Naive thymus-derived CD4-positive, alpha-beta T cell (primary cell): ENCODE measurements at regions of chr17 and their contacts with region 1.

Region 1: GRCh38 chr17:7989781-7990655 is 12.4 kb upstream of the GUCY2D start:
- DNase-seq: peak; percentile 82 to 99 (median 91)
- ATAC-seq: peak; percentile 96
- H3K4me3 ChIP-seq: peak overlapping the region; percentile 58
- H3K4me3 Mint-ChIP-seq: peak overlapping the region; percentile 80 to 88 (median 84)
- H3K27ac ChIP-seq: peak overlapping the region; percentile 65
- H3K27ac Mint-ChIP-seq: peak overlapping the region; percentile 80 to 95 (median 90)
- H3K4me1 ChIP-seq: peaks cover 10 to 13% of the 10 kb centered on the region in 2 donors
- H3K4me1 Mint-ChIP-seq: peaks cover 17 to 26% (median 20%) of the 10 kb centered on the region in 7 donors
- H3K27me3 ChIP-seq: no peaks in the 10 kb centered on the region
- H3K27me3 Mint-ChIP-seq: peaks cover 0 to 16% (median 0%) of the 10 kb centered on the region in 5 donors

Region 2: DNA sequence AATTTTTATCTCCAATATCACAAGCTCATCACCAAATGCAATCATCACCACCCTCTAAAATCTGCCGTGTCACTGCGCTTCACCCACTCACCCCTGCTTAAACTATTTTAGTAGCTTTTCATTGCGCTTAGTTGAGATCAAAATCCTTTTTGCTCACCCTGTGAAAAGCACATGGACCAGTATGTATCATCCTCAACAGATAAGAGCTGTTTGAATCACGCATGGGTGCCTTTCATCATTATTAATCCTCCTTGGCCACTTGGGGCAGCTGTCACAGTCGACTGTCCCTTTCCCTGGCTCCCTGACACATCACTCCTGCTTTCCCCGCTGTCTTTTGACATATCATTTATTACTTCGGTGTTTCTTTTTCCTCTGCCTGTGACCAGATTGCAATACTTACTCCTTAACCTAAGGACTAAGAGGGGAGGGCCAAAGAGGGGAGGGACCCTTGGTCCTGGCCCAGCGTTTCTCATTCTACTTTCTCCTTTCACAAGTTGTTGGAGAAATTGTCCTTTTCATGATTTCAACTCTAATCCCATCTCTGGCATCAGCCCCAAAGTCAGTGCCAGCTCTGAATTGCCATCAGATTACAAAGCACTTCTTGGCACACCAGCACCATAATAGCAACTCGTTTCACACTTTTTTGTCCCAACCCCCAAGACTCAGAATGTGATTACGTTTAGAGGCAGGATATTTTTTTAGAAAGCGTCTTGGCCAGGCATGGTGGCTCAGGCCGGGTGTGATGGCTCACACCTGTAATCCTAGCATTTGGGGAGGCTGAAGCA is 164.6 kb before region 1 on chr17:
- CTCF ChIA-PET with region 1: no interaction called
- POLR2A ChIA-PET with region 1: interaction called, 3 read pairs
- intact Hi-C with region 1: loop called (anchors 1 kb)
- DNase-seq: no peak
- ATAC-seq: peak; percentile 47
- H3K4me3 ChIP-seq: no peak overlapping the region
- H3K4me3 Mint-ChIP-seq: no peak overlapping the region
- H3K27ac ChIP-seq: no peak overlapping the region
- H3K27ac Mint-ChIP-seq: peak overlapping the region in 1 of 9 donors; percentile 23
- H3K4me1 ChIP-seq: no peaks in the 10 kb centered on the region
- H3K4me1 Mint-ChIP-seq: peaks cover 0 to 5% (median 0%) of the 10 kb centered on the region in 7 donors
- H3K27me3 ChIP-seq: no peaks in the 10 kb centered on the region
- H3K27me3 Mint-ChIP-seq: peaks cover 0 to 32% (median 0%) of the 10 kb centered on the region in 5 donors

Region 3: GRCh38 chr17:7851438-7852256 is 138.4 kb before region 1 on chr17:
- CTCF ChIA-PET with region 1: interaction called, 14 read pairs
- POLR2A ChIA-PET with region 1: no interaction called
- intact Hi-C with region 1: no loop called
- DNase-seq: peak; percentile 92 to 96 (median 94)
- ATAC-seq: peak; percentile 91
- H3K4me3 ChIP-seq: peak overlapping the region; percentile 51
- H3K4me3 Mint-ChIP-seq: peak overlapping the region; percentile 45 to 85 (median 70)
- H3K27ac ChIP-seq: peak overlapping the region; percentile 70
- H3K27ac Mint-ChIP-seq: peak overlapping the region; percentile 55 to 93 (median 82)
- H3K4me1 ChIP-seq: peaks cover 20 to 31% of the 10 kb centered on the region in 2 donors
- H3K4me1 Mint-ChIP-seq: peaks cover 0 to 26% (median 17%) of the 10 kb centered on the region in 7 donors
- H3K27me3 ChIP-seq: no peaks in the 10 kb centered on the region
- H3K27me3 Mint-ChIP-seq: no peaks in the 10 kb centered on the region

Region 4: DNA sequence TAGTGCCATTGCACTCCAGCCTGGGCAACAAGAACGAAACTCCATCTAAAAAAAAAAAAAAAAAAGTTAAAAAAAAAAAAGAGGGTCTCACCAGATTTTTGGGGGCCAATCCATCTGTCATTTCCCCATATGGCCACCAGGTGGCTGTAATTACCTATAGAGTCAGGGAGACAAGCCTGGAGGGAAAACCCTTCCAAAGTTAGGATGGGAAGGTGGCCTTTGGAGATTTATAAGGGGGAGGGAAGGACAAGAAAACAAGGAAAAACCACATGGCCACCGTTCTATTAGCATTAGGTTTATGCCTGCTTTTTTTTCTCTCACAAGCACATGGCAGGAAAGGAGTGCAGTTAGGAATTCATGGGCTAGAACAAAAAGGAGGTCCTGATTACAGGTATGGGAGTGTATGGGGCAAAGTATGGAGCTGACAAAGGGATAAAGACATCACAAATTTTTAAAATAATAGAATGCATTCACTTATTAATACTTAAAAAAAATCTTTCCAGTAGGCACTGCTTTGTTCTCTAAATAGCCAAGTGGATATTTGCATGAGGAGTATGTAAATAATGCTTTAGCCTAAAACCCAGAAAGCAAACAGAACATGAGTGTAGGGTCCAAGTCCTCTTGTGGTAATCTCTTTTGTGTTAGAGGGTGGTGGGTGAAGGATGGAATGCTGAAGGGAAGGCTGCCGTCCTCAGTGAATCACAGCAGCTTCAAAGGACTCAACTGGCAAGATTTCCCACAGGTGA is 127.2 kb before region 1 on chr17:
- CTCF ChIA-PET with region 1: interaction called, 133 read pairs
- POLR2A ChIA-PET with region 1: interaction called, 5 read pairs
- intact Hi-C with region 1: loop called (anchors 1 kb)
- DNase-seq: peak in 3 of 9 donors; percentile 48 to 53 (median 49)
- ATAC-seq: no peak
- H3K4me3 ChIP-seq: no peak overlapping the region
- H3K4me3 Mint-ChIP-seq: no peak overlapping the region
- H3K27ac ChIP-seq: no peak overlapping the region
- H3K27ac Mint-ChIP-seq: peak overlapping the region in 1 of 9 donors; percentile 60
- H3K4me1 ChIP-seq: peaks cover 17 to 19% of the 10 kb centered on the region in 2 donors
- H3K4me1 Mint-ChIP-seq: peaks cover 16 to 32% (median 27%) of the 10 kb centered on the region in 7 donors
- H3K27me3 ChIP-seq: no peaks in the 10 kb centered on the region
- H3K27me3 Mint-ChIP-seq: no peaks in the 10 kb centered on the region

Region 5: GRCh38 chr17:7887482-7888183 is 102.4 kb before region 1 on chr17:
- CTCF ChIA-PET with region 1: interaction called, 4 read pairs
- POLR2A ChIA-PET with region 1: interaction called, 4 read pairs
- intact Hi-C with region 1: loop called in 1 of 2 experiments (anchors 1 kb)
- DNase-seq: peak; percentile 41 to 96 (median 93)
- ATAC-seq: peak; percentile 83
- H3K4me3 ChIP-seq: peak overlapping the region; percentile 61
- H3K4me3 Mint-ChIP-seq: no peak overlapping the region
- H3K27ac ChIP-seq: peak overlapping the region; percentile 91
- H3K27ac Mint-ChIP-seq: no peak overlapping the region
- H3K4me1 ChIP-seq: peaks cover 28 to 29% of the 10 kb centered on the region in 2 donors
- H3K4me1 Mint-ChIP-seq: peaks cover 0 to 17% (median 8%) of the 10 kb centered on the region in 7 donors
- H3K27me3 ChIP-seq: no peaks in the 10 kb centered on the region
- H3K27me3 Mint-ChIP-seq: no peaks in the 10 kb centered on the region

Region 6: DNA sequence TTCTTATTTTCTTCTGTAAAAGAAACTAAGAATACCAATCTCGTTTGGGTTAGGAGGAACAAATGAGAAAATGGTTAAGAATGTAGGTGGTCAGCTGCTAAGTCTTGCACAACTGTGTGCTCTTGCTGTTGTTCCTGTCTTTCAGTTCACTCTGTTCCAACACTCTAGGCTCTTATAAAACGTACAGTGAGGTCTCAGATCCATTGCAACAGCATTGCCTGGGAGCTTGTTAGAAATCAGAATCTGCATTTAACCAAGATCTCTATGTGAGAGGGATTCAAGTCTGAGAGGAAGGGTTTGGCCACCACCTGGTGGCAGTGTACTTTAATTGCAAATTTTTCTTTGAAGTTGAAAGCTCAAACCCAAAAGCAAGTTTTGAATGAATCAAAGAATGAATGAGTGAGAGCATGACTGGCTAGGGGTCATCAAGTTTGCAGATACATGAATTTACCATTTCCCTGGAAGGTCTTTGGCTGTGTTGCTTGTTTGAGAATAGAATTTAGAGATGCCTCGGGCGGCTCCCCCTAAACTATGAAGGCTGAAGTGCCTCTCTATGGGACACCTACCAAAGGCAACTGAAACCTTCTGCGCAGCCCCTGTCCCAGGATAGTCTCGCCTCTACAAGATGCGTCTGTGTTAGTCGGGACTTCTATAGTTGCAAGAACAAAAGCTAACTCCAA is 51.4 kb after region 1 on chr17:
- CTCF ChIA-PET with region 1: interaction called, 5 read pairs
- POLR2A ChIA-PET with region 1: no interaction called
- intact Hi-C with region 1: loop called in 1 of 2 experiments (anchors 1 kb)
- DNase-seq: peak in 7 of 9 donors; percentile 18 to 56 (median 47)
- ATAC-seq: peak; percentile 69
- H3K4me3 ChIP-seq: no peak overlapping the region
- H3K4me3 Mint-ChIP-seq: no peak overlapping the region
- H3K27ac ChIP-seq: no peak overlapping the region
- H3K27ac Mint-ChIP-seq: no peak overlapping the region
- H3K4me1 ChIP-seq: no peaks in the 10 kb centered on the region
- H3K4me1 Mint-ChIP-seq: peaks cover 0 to 16% (median 0%) of the 10 kb centered on the region in 7 donors
- H3K27me3 ChIP-seq: peaks cover 0 to 13% of the 10 kb centered on the region in 2 donors
- H3K27me3 Mint-ChIP-seq: peaks cover 18 to 30% (median 23%) of the 10 kb centered on the region in 5 donors